Activated CD4-positive, alpha-beta memory T cell treated with anti-CD3 and anti-CD28 coated beads for 36 hours (primary cell): ENCODE measurements at regions of chr14 and their contacts with region 1.

Region 1: GRCh38 chr14:74762917-74763802 is at the start of gene YLPM1:
- DNase-seq: peak; percentile 95
- H3K4me3 Mint-ChIP-seq: peak within 1 kb of the TSS; percentile 94
- H3K27ac Mint-ChIP-seq: peak within 1 kb of the TSS; percentile 91
- H3K4me1 Mint-ChIP-seq: peaks cover 44% of the 10 kb centered on the region
- H3K27me3 Mint-ChIP-seq: no peaks in the 10 kb centered on the region
- total RNA-seq, gene YLPM1: 46.3 to 51.8 TPM

Region 2: GRCh38 chr14:74302634-74303577 is 460.3 kb before region 1 on chr14 and contains the start of gene ABCD4:
- CTCF ChIA-PET with region 1: no interaction called
- POLR2A ChIA-PET with region 1: no interaction called
- intact Hi-C with region 1: loop called (anchors 5 kb)
- DNase-seq: peak; percentile 92
- H3K4me3 Mint-ChIP-seq: peak within 1 kb of the TSS; percentile 100
- H3K27ac Mint-ChIP-seq: peak within 1 kb of the TSS; percentile 94
- H3K4me1 Mint-ChIP-seq: peaks cover 32% of the 10 kb centered on the region
- H3K27me3 Mint-ChIP-seq: no peaks in the 10 kb centered on the region
- total RNA-seq, gene ABCD4: 42.7 to 47.7 TPM

Region 3: DNA sequence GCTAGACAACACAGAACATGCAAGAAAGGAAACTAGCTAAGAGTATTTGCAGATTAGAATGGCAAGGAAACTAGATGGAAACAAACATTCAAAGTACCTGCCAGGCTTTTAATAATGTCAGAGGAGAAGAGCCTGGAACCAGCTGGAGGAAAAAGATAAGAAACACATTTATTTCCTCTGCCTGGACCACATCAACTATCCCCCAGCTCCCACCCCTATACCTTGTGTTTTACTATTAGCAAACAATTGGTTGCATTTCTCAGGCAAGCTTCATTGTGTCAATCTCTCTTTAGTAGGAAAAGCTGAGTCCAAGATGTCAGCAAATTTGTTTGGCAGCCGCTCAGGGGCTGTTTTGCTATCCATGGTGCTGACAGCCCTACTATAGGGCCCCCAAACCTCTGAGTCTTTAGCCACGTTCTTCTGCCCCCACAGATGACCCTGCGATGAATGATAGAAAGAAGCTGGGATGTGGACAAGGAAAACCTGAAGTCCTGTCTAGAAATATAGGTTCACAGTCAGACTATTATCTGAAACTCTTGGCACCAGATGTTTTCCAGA is 325.6 kb before region 1 on chr14:
- CTCF ChIA-PET with region 1: no interaction called
- POLR2A ChIA-PET with region 1: no interaction called
- intact Hi-C with region 1: no loop called
- DNase-seq: no peak
- H3K4me3 Mint-ChIP-seq: no peak overlapping the region
- H3K27ac Mint-ChIP-seq: no peak overlapping the region
- H3K4me1 Mint-ChIP-seq: no peaks in the 10 kb centered on the region
- H3K27me3 Mint-ChIP-seq: peaks cover 16% of the 10 kb centered on the region

Region 4: DNA sequence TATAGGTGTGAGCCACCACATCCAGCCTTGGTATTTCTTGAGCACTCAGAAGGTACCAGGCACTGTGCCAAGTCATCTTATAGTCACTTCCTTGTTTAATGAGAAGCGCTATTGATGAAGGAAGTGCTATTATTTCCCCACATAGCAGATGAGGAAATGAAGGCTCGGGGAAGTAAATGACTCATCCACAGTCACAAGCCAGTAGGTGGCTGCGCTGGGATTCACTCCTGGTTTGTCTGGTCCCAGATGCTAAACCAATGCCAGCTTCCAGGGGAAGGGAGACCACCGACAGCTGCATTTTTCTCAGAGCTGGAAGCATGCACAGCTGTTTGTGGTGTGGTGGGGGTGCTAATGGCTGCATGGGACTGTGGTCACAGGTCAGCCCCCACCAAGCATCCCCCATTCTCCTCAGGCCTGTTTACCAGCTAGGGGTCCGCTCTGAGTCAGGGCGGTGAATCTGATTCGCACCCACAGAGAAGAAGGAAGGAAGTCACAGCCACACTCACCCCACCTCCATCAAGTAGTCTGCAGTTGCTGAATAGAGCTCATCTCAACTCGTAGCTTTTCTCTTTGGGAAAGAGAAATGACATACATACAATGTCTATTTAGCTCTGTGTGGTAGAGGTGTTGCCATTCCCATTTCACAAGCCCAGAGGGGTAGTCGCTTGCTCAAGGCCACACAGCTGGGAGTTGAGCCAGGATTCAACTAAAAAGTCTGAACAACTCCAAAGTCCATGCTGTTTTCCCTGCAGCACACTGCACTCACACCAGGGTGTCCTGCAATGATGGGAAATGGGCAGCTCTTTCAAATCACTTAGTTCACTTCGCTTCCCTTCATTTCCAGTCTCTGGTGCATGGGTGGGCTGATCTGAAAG is 144.8 kb before region 1 on chr14:
- CTCF ChIA-PET with region 1: interaction called, 3 read pairs
- POLR2A ChIA-PET with region 1: no interaction called
- intact Hi-C with region 1: loop called (anchors 2 kb)
- DNase-seq: peak; percentile 79
- H3K4me3 Mint-ChIP-seq: no peak overlapping the region
- H3K27ac Mint-ChIP-seq: peak overlapping the region; percentile 73
- H3K4me1 Mint-ChIP-seq: peaks cover 60% of the 10 kb centered on the region
- H3K27me3 Mint-ChIP-seq: peaks cover 1% of the 10 kb centered on the region

Region 5: DNA sequence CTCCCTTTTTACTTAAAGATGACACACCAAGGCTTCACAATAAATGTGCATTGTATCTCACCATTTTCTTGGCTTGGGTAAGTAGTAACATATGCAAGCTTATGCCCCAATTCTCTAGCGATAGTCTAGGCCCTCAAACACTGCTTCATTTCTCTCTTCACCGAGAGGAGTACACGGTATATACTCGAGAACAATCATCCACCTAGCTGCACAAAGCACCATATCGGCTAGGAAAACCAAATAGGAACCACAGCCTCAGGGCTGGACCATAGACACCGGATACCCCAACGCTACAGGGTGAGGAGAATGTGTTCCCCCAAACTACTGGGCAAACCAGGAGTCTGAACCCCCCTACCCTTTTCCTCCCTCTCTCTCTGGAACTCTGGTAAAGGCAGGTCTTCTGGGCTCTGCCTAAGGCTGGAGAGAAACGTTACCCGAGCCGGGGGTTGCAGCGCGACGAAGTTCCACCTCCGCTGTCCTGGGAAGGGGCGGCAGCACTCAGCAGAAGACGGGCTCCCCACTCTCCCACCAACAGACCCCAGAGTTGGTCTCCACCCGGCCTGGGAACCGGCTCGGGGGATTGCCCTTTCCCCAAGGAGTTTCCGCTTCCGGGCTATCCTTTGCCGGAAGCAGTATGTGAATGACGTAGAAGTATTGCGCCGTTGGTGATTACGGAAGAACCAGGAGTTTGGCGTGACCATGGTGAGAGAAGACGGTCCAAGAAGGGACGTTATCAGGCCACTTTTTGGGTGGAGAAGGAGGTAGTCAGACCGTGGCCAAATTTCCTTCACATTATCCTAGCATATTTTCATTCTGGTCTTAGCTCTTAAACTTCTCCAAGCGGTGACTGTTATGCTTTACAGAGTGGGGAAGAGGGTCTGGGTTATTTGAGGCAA is 50.4 kb before region 1 on chr14 and contains the starts of genes AREL1 and FCF1:
- CTCF ChIA-PET with region 1: interaction called, 3 read pairs
- POLR2A ChIA-PET with region 1: interaction called, 4 read pairs
- intact Hi-C with region 1: loop called (anchors 1 kb)
- DNase-seq: peak; percentile 90
- H3K4me3 Mint-ChIP-seq: peak within 1 kb of the TSS; percentile 99
- H3K27ac Mint-ChIP-seq: peak within 1 kb of the TSS; percentile 89
- H3K4me1 Mint-ChIP-seq: peaks cover 44% of the 10 kb centered on the region
- H3K27me3 Mint-ChIP-seq: no peaks in the 10 kb centered on the region
- total RNA-seq, gene AREL1: 31.9 to 34.6 TPM
- total RNA-seq, gene FCF1: 72.1 to 72.5 TPM

Region 6: DNA sequence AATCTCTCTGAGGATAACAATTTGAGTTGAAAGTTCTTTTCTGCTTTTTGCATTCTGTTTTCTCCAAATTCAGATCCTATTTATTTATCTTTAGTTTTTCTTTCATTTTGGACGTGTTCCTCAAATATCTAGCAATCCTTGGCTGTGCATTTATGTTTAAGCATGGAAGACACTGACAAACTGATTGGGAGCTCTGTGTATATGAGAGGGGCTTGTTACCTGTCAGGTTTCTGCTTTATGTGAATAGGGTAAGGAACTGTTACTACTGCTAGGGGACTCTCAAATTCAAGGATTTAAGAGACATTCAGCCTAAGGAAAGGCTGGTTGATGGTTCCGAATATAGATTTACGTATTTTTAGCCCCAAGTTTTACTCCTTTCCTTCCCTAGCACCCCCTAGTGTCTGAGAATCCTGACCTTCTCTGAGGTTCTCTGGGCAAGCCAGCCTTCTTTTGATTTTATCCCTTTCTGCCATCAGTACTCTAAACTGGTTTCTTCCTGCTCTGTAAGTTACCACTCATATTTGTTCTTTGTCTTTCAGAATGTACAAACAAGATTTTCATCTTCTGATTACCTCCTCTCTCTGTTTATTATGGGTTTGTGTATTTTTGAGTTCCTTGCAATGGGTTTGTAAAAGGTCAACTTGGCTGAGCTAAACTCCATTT is 30.5 kb after region 1 on chr14:
- CTCF ChIA-PET with region 1: interaction called, 4 read pairs
- POLR2A ChIA-PET with region 1: interaction called, 4 read pairs
- intact Hi-C with region 1: loop called (anchors 2 kb)
- DNase-seq: no peak
- H3K4me3 Mint-ChIP-seq: no peak overlapping the region
- H3K27ac Mint-ChIP-seq: peak overlapping the region; percentile 54
- H3K4me1 Mint-ChIP-seq: peaks cover 36% of the 10 kb centered on the region
- H3K27me3 Mint-ChIP-seq: no peaks in the 10 kb centered on the region

Region 7: GRCh38 chr14:74841230-74842207 is 78.4 kb after region 1 on chr14:
- CTCF ChIA-PET with region 1: interaction called, 4 read pairs
- POLR2A ChIA-PET with region 1: no interaction called
- intact Hi-C with region 1: loop called (anchors 2 kb)
- DNase-seq: peak; percentile 49
- H3K4me3 Mint-ChIP-seq: no peak overlapping the region
- H3K27ac Mint-ChIP-seq: peak overlapping the region; percentile 83
- H3K4me1 Mint-ChIP-seq: peaks cover 55% of the 10 kb centered on the region
- H3K27me3 Mint-ChIP-seq: no peaks in the 10 kb centered on the region